Activated CD4-positive, alpha-beta memory T cell treated with anti-CD3 and anti-CD28 coated beads for 36 hours (primary cell): ENCODE measurements at regions of chr16 and their contacts with region 1.

Region 1: GRCh38 chr16:2867987-2868789 is 10.2 kb upstream of the PRSS22 start:
- DNase-seq: peak; percentile 99
- H3K4me3 Mint-ChIP-seq: peak overlapping the region; percentile 91
- H3K27ac Mint-ChIP-seq: peak overlapping the region; percentile 90
- H3K4me1 Mint-ChIP-seq: peaks cover 12% of the 10 kb centered on the region
- H3K27me3 Mint-ChIP-seq: no peaks in the 10 kb centered on the region

Region 2: DNA sequence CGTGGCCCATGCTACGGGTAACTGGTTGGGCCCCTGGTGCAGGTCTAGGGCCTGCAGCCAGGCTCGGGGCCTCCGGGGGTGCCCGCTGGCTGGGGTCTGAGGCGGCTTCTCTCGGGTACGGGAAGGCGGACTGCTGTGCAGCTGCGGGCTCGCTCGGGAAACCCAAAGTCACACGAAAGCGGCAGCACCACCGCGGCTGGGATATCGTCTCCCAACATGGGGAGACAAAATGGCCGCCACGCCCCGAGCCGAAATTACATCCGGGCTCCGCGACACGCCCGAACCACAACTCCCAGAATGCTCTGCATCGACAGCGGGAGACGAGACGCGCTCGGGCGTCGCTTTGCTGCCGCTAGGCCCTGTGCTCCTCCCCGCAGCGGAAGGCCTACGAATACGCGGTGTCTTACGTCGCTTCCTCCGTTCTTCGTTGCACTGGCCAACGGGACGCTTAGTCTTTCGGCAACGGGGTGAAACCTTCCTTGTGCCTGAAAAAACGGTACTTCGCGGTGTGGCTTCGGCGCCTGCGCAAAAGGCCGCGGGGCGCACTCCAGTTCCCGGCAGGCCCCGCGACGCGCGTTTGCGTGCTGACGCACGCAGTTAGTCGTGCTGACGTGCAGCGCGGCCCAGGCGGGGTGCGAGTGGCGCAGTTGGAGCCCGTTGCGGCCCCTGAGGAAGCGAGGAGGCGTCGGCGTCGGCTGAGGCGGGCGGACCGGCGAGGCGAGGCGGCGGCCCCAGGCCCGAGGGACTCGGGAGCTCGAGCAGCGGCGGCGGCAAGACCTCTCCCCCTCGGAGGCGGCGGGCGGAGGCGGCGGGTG is 115.9 kb before region 1 on chr16 and contains the start of gene SRRM2:
- CTCF ChIA-PET with region 1: interaction called, 5 read pairs
- POLR2A ChIA-PET with region 1: interaction called, 5 read pairs
- intact Hi-C with region 1: loop called (anchors 2 kb)
- DNase-seq: peak; percentile 97
- H3K4me3 Mint-ChIP-seq: peak within 1 kb of the TSS; percentile 96
- H3K27ac Mint-ChIP-seq: peak within 1 kb of the TSS; percentile 99
- H3K4me1 Mint-ChIP-seq: peaks cover 45% of the 10 kb centered on the region
- H3K27me3 Mint-ChIP-seq: no peaks in the 10 kb centered on the region
- total RNA-seq, gene SRRM2: 483 to 526 TPM

Region 3: GRCh38 chr16:2838928-2839327 is 29.3 kb before region 1 on chr16:
- CTCF ChIA-PET with region 1: interaction called, 60 read pairs
- POLR2A ChIA-PET with region 1: interaction called, 8 read pairs
- intact Hi-C with region 1: loop called (anchors 1 kb)
- DNase-seq: peak; percentile 72
- H3K4me3 Mint-ChIP-seq: no peak overlapping the region
- H3K27ac Mint-ChIP-seq: no peak overlapping the region
- H3K4me1 Mint-ChIP-seq: peaks cover 35% of the 10 kb centered on the region
- H3K27me3 Mint-ChIP-seq: peaks cover 1% of the 10 kb centered on the region

Region 4: DNA sequence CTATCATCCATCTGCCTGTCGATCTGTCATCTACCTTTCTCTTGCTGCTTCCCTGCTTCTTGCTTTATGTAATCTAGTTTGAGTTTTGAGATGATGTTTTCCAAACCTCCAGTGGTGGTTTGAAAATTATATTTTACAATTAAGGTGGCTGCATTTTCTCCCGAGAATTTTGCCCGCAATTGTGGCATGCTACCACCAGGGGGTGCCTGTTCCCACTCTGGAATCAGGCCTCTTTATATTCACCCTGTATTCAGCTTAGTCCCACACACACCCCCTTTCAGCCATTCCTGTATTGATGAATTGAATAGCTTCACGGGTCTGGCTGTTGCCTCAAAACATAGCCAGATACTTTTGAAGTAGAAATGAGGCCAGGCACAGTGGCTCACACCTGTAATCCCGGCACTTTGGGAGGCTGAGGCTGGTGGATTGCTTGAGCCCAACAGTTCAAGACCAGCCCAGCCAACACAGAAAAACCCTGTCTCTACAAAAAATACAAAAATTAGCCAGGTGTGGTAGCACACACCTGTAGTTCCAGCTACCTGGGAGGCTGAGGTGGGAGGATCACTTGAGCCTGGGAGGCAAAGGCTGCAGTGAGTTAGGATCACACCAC is 13.4 kb before region 1 on chr16:
- CTCF ChIA-PET with region 1: interaction called, 34 read pairs
- POLR2A ChIA-PET with region 1: no interaction called
- intact Hi-C with region 1: no loop called
- DNase-seq: peak; percentile 35
- H3K4me3 Mint-ChIP-seq: no peak overlapping the region
- H3K27ac Mint-ChIP-seq: no peak overlapping the region
- H3K4me1 Mint-ChIP-seq: peaks cover 5% of the 10 kb centered on the region
- H3K27me3 Mint-ChIP-seq: peaks cover 2% of the 10 kb centered on the region

Region 5: DNA sequence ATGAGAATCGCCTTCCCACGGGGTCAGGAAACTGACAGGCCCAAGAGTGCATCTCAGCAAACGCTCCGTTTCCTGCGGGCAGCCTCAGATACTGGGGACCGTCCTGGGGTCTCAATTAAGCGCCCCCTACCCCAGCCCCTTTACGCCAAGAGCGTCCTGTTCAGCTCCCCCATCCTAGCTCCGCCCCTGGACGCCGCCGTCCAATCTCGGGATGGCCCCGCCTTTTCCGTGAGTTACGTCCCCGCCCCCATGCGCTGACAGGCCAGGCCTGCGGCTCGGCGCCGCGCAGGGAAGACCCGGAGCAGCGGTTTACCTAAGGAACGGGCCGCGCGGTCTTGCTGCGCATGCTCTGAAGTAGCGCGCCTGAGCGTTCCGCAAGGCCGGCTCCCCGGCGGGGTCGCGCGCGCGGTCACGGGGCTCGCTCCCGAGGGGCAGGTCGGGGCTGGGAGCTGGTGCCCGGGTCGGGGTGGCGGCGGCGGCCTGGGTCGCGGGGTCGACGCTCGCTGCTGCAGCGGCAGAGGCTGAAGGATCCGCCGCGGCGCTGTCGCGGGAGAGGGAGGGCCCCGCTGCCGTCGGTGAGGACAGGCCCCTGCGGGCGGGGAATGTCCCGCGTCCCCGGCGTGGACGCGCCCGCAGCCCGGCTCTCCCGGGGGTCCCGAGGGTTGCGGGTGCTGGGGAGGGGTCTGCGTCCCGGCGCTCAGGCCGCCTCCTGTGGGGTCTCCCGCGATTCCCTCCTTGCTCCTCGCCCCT is 43.6 kb after region 1 on chr16 and contains the start of gene FLYWCH1:
- CTCF ChIA-PET with region 1: interaction called, 9 read pairs
- POLR2A ChIA-PET with region 1: interaction called, 3 read pairs
- intact Hi-C with region 1: loop called (anchors 5 kb)
- DNase-seq: peak; percentile 99
- H3K4me3 Mint-ChIP-seq: peak within 1 kb of the TSS; percentile 87
- H3K27ac Mint-ChIP-seq: peak within 1 kb of the TSS; percentile 80
- H3K4me1 Mint-ChIP-seq: peaks cover 38% of the 10 kb centered on the region
- H3K27me3 Mint-ChIP-seq: no peaks in the 10 kb centered on the region
- total RNA-seq, gene FLYWCH1: 49.2 to 52.2 TPM

Region 6: DNA sequence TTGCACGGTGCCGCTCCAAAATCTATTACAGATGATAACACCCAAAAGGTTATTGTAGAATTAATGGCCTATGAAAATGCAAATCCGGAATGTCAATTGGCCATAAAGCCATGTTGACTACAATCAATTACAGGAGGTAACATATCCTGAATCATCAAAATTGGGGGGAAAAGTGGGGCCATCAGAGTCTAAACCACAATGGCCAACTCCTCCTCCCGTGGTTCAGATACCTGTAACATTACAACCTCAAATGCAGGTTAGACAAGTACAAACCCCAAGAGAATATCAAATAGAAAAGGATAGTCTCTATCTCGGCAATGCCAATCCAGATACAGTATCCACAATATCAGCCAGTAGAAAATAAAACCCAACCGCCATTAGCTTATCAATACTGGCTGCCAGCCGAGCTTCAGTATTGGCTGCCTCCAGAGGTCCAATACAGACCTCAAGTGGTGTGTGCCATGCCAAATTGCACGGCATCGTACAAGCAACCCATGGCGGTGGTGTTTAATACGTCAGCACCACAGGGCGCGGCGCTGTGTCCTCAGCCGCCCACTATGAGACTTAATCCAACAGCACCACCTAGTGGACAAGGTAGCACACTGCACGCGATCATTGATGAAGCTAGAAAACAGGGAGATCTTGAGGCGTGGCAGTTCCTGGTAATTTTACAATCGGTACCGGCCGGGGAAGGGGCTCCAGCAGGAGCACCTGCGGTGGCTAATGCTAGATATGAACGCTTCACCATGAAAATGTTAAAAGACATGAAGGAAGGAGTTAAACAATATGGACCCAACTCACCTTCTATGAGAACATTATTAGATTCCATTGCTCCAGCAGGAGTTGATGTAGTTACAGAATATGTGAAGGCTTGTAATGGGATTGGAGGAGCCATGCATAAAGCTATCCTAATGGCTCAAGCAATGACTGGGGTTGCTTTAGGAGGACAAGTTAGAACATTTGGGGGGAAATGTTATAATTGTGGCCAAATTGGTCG is 58.8 kb after region 1 on chr16:
- CTCF ChIA-PET with region 1: interaction called, 13 read pairs
- POLR2A ChIA-PET with region 1: no interaction called
- intact Hi-C with region 1: loop called (anchors 2 kb)
- DNase-seq: peak; percentile 92
- H3K4me3 Mint-ChIP-seq: no peak overlapping the region
- H3K27ac Mint-ChIP-seq: no peak overlapping the region
- H3K4me1 Mint-ChIP-seq: peaks cover 12% of the 10 kb centered on the region
- H3K27me3 Mint-ChIP-seq: no peaks in the 10 kb centered on the region